H1 (cell line): ENCODE measurements at regions of chr7 and their contacts with region 1.

Region 1: DNA sequence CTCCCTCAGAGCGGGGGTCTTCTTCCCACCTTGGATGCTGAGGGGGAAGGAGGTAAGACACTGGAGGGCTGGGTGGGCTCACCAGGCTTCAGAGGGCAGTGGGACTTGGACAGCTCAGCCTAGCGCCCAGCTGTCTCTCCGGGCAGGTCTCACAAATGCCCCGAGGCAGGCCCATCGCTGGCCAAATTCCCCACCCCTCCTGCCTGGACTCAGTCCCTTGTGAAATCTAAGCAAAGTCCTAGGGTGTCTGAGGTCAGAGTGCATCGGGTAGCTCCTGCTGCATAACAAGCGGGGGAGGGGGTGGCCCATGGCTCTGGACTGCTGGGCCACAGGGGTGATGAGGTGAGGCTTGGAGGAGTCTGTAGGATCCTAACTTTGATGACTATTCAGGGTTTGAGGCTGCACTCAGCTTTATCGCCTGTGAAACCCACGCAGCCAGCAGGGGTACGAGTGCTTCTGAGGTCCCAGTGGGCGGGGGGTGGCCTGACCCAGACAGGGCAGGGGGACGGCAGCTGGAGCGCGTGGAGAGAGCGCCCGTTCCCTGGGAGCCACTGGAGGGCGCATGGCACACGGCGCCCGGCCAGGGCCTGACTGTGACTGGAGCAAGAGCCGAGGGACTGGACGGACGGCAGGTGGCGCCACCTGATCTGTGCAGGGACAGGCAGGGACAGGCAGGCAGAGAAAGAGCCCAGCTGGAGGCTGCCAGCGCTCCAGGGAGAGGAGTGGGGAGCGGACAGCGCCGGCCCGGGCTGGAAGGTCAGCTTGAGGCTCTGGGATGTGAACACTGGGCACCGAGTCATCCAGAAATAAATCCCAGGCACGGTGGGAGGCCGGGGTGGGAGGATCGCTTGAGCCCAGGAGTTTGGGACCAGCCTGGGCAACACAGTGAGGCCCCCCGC is 10.0 kb downstream of the CYP2W1 start:
- DNase-seq: peak; percentile 94 to 96
- H3K4me3 ChIP-seq: no peak overlapping the region
- H3K27ac ChIP-seq: no peak overlapping the region
- H3K4me1 ChIP-seq: peaks cover 0 to 8% (median 5%) of the 10 kb centered on the region in 4 experiments; a peak in 5 of 7 replicates
- H3K27me3 ChIP-seq: no peaks in the 10 kb centered on the region
- CTCF ChIP-seq: peak in 2 of 3 experiments; percentile 100; a peak in 3 of 4 replicates
- EP300 ChIP-seq: 0 out of 3 replicates have a peak, but pooled peaks of 1 of the 2 experiments have one; percentile 42
- POLR2A ChIP-seq: no peak
- RAD21 ChIP-seq: peak; percentile 96 to 98

Region 2: GRCh38 chr7:786472-787255 is 206.3 kb before region 1 on chr7:
- CTCF ChIA-PET with region 1: no interaction called
- POLR2A ChIA-PET with region 1: no interaction called
- DNase-seq: peak; percentile 38 to 93
- H3K4me3 ChIP-seq: no peak overlapping the region
- H3K27ac ChIP-seq: no peak overlapping the region
- H3K4me1 ChIP-seq: no peaks in the 10 kb centered on the region
- H3K27me3 ChIP-seq: no peaks in the 10 kb centered on the region
- CTCF ChIP-seq: peak in 2 of 3 experiments; percentile 83 to 91; a peak in 3 of 4 replicates
- EP300 ChIP-seq: no peak
- POLR2A ChIP-seq: no peak
- RAD21 ChIP-seq: peak; percentile 86 to 91

Region 3: DNA sequence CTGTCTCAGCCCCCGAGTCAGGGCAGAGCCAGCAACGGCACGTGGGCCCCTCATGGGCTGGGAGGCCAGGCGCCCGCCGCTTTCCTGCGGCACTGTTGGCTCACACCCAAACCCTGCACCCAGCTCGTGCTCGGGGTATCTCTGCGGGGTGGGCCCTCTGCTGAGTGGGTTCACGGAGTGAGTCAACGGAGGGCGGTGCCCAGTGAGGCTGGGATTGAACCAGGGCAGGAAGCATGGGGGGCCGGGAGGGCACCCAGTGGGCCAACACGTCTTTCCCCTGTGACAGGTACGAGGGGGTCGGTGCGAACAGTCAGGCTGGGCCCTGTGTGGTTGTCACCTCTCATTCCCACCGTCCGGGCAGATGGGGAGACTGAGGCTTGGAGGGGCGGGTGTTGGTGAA is 67.3 kb before region 1 on chr7:
- CTCF ChIA-PET with region 1: no interaction called
- POLR2A ChIA-PET with region 1: no interaction called
- DNase-seq: peak in 1 of 2 experiments; percentile 44
- H3K4me3 ChIP-seq: no peak overlapping the region
- H3K27ac ChIP-seq: no peak overlapping the region
- H3K4me1 ChIP-seq: peaks cover 0 to 8% (median 0%) of the 10 kb centered on the region in 4 experiments; a peak in 2 of 7 replicates
- H3K27me3 ChIP-seq: no peaks in the 10 kb centered on the region
- CTCF ChIP-seq: no peak
- EP300 ChIP-seq: no peak
- POLR2A ChIP-seq: no peak
- RAD21 ChIP-seq: no peak

Region 4: DNA sequence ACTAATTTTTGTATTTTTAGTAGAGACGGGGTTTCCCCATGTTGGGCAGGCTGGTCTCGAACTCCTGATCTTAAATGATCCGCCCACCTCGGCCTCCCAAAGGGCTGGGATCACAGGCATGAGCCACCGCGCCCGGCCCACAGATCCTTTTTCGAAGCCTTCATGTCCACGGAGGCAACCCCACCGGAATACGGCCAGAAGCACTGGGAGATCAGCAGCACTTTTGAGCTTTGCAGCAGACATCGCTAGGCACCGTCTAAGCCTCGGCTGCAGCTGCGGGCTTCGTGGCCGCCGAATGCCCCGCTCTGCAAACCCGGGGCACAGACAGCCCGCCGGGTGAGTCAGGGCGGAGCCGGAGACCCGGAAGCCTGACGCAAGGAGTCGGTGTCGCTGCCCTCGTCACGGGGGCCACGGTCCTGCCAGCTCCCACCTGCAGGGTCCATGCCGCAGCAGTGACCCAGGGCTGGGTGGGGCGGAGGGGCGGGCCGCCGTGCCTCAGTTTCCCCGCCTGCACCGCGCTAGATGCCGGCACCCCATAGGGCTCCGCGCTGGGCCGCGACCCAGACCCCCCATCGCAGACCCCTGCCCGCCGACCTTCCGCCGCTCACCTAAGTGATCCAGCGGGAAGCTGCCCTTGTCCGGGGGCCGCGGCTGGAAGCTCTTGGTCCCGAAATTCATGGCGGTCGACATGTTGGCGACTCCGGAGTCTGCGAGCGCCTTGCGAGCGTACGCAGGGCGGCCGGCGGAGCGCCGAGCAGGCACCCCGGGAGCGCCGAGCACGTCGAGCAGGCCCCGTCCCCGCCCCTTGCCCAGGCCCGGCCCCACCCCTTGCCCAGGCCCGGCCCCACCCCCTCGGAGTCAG is 17.9 kb before region 1 on chr7 and contains the start of gene COX19:
- CTCF ChIA-PET with region 1: interaction called, 32 read pairs
- POLR2A ChIA-PET with region 1: interaction called, 8 read pairs
- DNase-seq: peak; percentile 54 to 94
- H3K4me3 ChIP-seq: peak within 1 kb of the TSS; percentile 67 to 89 (median 83)
- H3K27ac ChIP-seq: peak within 1 kb of the TSS; percentile 70; the same call in 1 of the 2 replicates
- H3K4me1 ChIP-seq: peaks cover 0 to 4% (median 2%) of the 10 kb centered on the region in 4 experiments; a peak in 5 of 7 replicates
- H3K27me3 ChIP-seq: no peaks in the 10 kb centered on the region
- CTCF ChIP-seq: no peak
- EP300 ChIP-seq: peak in 1 of 2 experiments; percentile 26; a peak in 1 of 3 replicates
- POLR2A ChIP-seq: peak in 1 of 2 experiments; percentile 89; a peak in 2 of 3 replicates
- RAD21 ChIP-seq: no peak
- total RNA-seq, gene COX19: 7.9 and 9.0 TPM in 2 replicates

Region 5: GRCh38 chr7:1028031-1028770 is 35.2 kb after region 1 on chr7:
- CTCF ChIA-PET with region 1: interaction called, 117 read pairs
- POLR2A ChIA-PET with region 1: interaction called, 5 read pairs
- DNase-seq: peak; percentile 36 to 88
- H3K4me3 ChIP-seq: peak overlapping the region; percentile 42 to 68 (median 48)
- H3K27ac ChIP-seq: no peak overlapping the region; the same call in 1 of the 2 replicates
- H3K4me1 ChIP-seq: peaks cover 0 to 9% (median 3%) of the 10 kb centered on the region in 4 experiments; a peak in 5 of 7 replicates
- H3K27me3 ChIP-seq: no peaks in the 10 kb centered on the region; a peak in 1 of 7 replicates
- CTCF ChIP-seq: no peak
- EP300 ChIP-seq: peak in 1 of 2 experiments; percentile 86; a peak in 1 of 3 replicates
- POLR2A ChIP-seq: peak in 1 of 2 experiments; percentile 61; a peak in 2 of 3 replicates
- RAD21 ChIP-seq: no peak

Region 6: DNA sequence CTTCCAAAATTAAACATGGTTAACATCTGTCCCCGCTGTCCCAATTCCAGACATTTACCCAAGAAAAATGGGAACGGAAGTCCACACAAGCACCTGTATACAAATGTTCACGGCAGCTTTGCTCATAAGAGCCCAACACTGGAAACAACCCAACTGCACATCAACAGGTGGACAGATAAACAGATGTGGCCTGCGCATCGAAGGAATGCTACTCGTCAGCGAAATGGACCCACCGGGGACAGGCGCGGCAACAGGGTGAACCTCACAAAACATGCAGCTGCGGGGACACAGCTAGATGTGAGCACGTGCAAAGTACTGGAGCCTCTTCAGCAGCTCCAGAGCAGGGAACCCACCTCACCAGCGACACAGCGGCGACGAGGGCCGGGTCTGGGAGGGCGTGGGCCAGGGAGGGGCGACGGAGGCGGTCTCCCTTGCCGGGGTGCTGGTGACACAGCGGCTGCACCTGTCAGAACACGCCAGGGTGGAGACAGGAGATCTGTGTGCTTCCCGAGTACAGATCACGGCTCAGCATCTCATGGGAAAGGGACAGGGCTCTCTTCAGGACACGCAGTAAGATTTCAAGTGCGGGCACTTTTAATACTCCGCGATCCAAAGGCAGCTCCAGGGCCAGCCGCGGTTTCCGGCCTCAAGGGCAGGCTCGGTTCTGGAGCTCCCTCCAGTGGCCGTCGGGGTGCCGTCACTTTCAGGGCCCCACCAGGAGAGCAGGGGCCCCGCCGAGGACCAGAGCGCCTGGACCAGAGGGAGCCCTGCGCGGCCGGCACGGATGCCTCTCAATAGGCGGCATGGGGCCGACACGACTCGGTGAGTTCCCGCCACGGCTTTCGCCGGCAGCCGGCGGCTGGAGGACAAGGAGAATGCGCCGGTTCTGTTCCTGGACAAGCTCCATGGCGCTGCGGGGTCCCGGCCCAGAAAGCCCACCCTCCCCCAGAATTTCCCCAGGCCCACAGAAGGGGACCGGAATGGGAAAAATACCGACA is 72.6 kb after region 1 on chr7:
- CTCF ChIA-PET with region 1: interaction called, 143 read pairs
- POLR2A ChIA-PET with region 1: interaction called, 6 read pairs
- DNase-seq: peak; percentile 49 to 96
- H3K4me3 ChIP-seq: peak overlapping the region in 1 of 4 experiments; percentile 24; a peak in 1 of 8 replicates
- H3K27ac ChIP-seq: no peak overlapping the region
- H3K4me1 ChIP-seq: peaks cover 0 to 14% (median 6%) of the 10 kb centered on the region in 4 experiments; a peak in 6 of 7 replicates
- H3K27me3 ChIP-seq: no peaks in the 10 kb centered on the region
- CTCF ChIP-seq: peak in 2 of 3 experiments; percentile 78 to 96; a peak in 3 of 4 replicates
- EP300 ChIP-seq: no peak
- POLR2A ChIP-seq: no peak
- RAD21 ChIP-seq: peak; percentile 88 to 95

Region 7: GRCh38 chr7:1123715-1124114 is 130.8 kb after region 1 on chr7:
- CTCF ChIA-PET with region 1: interaction called, 11 read pairs
- POLR2A ChIA-PET with region 1: no interaction called
- DNase-seq: peak; percentile 47 to 84
- H3K4me3 ChIP-seq: no peak overlapping the region
- H3K27ac ChIP-seq: no peak overlapping the region
- H3K4me1 ChIP-seq: peaks cover 0 to 14% (median 8%) of the 10 kb centered on the region in 4 experiments; a peak in 6 of 7 replicates
- H3K27me3 ChIP-seq: no peaks in the 10 kb centered on the region
- CTCF ChIP-seq: peak; percentile 71 to 79 (median 71)
- EP300 ChIP-seq: no peak
- POLR2A ChIP-seq: no peak
- RAD21 ChIP-seq: peak; percentile 36 to 56

Region 8: DNA sequence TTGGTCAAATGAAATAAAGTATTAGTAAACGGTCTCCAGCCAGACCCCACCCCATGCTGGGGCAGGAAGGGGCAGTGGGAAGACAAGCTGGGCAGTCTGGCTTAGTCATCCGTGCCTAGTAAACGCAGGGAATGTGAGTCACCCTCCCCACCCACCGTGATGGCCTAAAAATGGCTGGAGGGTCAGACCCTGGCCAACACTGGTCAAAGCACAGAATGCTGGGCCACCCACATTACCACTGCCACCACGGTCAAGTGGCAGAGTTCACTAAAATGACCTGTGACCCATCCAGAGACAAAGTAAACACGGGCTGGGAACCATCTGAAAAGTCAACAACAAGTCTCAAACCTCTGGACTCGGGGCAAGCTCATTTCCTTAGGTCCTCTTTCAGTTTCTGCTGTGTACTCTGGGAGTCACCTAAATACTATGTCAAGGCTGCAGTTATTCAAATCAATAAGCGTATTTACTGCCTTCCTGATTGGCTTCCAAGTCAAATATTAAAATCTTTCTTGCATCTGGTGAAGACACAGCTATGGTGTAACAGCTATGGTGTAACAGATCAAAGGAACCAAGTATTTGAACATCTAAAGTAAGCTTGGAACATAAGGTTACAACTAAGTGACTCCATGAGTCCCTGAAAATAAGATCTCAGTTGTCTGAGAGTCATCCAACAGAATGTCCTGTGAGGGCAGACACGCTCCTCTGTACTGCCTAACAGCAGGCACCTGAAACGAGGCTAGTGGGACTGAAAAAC is 164.0 kb after region 1 on chr7:
- CTCF ChIA-PET with region 1: interaction called, 10 read pairs
- POLR2A ChIA-PET with region 1: no interaction called
- DNase-seq: no peak
- H3K4me3 ChIP-seq: no peak overlapping the region
- H3K27ac ChIP-seq: no peak overlapping the region
- H3K4me1 ChIP-seq: peaks cover 0 to 2% (median 0%) of the 10 kb centered on the region in 4 experiments; a peak in 3 of 7 replicates
- H3K27me3 ChIP-seq: no peaks in the 10 kb centered on the region
- CTCF ChIP-seq: no peak
- EP300 ChIP-seq: no peak
- POLR2A ChIP-seq: no peak
- RAD21 ChIP-seq: no peak

Region 9: GRCh38 chr7:1181640-1182039 is 188.7 kb after region 1 on chr7:
- CTCF ChIA-PET with region 1: interaction called, 12 read pairs
- POLR2A ChIA-PET with region 1: interaction called, 3 read pairs
- DNase-seq: no peak
- H3K4me3 ChIP-seq: no peak overlapping the region
- H3K27ac ChIP-seq: no peak overlapping the region
- H3K4me1 ChIP-seq: no peaks in the 10 kb centered on the region
- H3K27me3 ChIP-seq: no peaks in the 10 kb centered on the region; a peak in 1 of 7 replicates
- CTCF ChIP-seq: no peak
- EP300 ChIP-seq: no peak
- POLR2A ChIP-seq: no peak
- RAD21 ChIP-seq: no peak